Prostate gland (tissue), 2 donors: ENCODE measurements at regions of chr6 and their contacts with region 1.

Region 1: GRCh38 chr6:75217193-75217592 is 11.3 kb upstream of the COL12A1 start:
- DNase-seq: no peak
- H3K4me3 ChIP-seq: no peak overlapping the region
- H3K27ac ChIP-seq: no peak overlapping the region
- H3K4me1 ChIP-seq: no peaks in the 10 kb centered on the region
- H3K27me3 ChIP-seq: no peaks in the 10 kb centered on the region
- CTCF ChIP-seq: no peak
- POLR2A ChIP-seq: no peak

Region 2: GRCh38 chr6:73739096-73739495 is 1478.1 kb before region 1 on chr6:
- intact Hi-C with region 1: loop called (anchors 5 kb)
- DNase-seq: no peak
- H3K4me3 ChIP-seq: no peak overlapping the region
- H3K27ac ChIP-seq: no peak overlapping the region
- H3K4me1 ChIP-seq: no peaks in the 10 kb centered on the region
- H3K27me3 ChIP-seq: no peaks in the 10 kb centered on the region
- CTCF ChIP-seq: peak; percentile 43 to 82 (median 80)
- POLR2A ChIP-seq: no peak

Region 3: GRCh38 chr6:74510878-74511277 is 706.3 kb before region 1 on chr6:
- intact Hi-C with region 1: no loop called
- DNase-seq: no peak
- H3K4me3 ChIP-seq: no peak overlapping the region
- H3K27ac ChIP-seq: no peak overlapping the region
- H3K4me1 ChIP-seq: no peaks in the 10 kb centered on the region
- H3K27me3 ChIP-seq: no peaks in the 10 kb centered on the region
- CTCF ChIP-seq: no peak
- POLR2A ChIP-seq: no peak

Region 4: GRCh38 chr6:74991573-74992332 is 225.4 kb before region 1 on chr6:
- intact Hi-C with region 1: no loop called
- DNase-seq: no peak
- H3K4me3 ChIP-seq: no peak overlapping the region
- H3K27ac ChIP-seq: no peak overlapping the region
- H3K4me1 ChIP-seq: no peaks in the 10 kb centered on the region
- H3K27me3 ChIP-seq: no peaks in the 10 kb centered on the region
- CTCF ChIP-seq: no peak
- POLR2A ChIP-seq: no peak